ENCODE measurements at regions of chr2 and their contacts with region 1.

Region 1: GRCh38 chr2:146173934-146174333 is 1654.0 kb upstream of the ZEB2 start:
- DNase-seq: no peak
- H3K4me3 ChIP-seq: no peak overlapping the region
- H3K27ac ChIP-seq: no peak overlapping the region
- H3K4me1 ChIP-seq: no peaks in the 10 kb centered on the region
- H3K27me3 ChIP-seq: no peaks in the 10 kb centered on the region
- CTCF ChIP-seq: no peak
- POLR2A ChIP-seq: no peak

Region 2: DNA sequence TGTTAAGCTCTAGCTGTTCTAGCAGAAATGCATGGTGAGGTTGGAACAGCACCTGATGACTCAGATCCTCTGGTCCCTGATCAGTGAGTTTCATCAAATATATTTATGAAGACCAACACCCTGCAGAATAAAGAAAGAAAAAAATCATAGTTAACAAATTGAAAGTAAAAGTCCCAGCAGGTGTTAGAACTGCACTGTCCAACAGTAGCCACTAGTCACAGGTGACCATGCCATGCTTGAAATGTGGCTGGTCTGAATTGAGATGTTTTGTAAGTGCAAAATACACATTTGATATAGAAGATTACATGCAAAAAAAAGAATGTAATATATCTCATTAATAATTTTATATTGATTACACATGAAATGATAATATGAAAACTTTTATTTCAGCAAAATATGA is 643.3 kb before region 1 on chr2:
- intact Hi-C with region 1: no loop called
- DNase-seq: no peak
- H3K4me3 ChIP-seq: no peak overlapping the region
- H3K27ac ChIP-seq: no peak overlapping the region
- H3K4me1 ChIP-seq: no peaks in the 10 kb centered on the region
- H3K27me3 ChIP-seq: no peaks in the 10 kb centered on the region
- CTCF ChIP-seq: no peak
- POLR2A ChIP-seq: no peak

Region 3: GRCh38 chr2:145984541-145984940 is 189.4 kb before region 1 on chr2:
- intact Hi-C with region 1: loop called (anchors 5 kb)
- DNase-seq: no peak
- H3K4me3 ChIP-seq: no peak overlapping the region
- H3K27ac ChIP-seq: no peak overlapping the region
- H3K4me1 ChIP-seq: no peaks in the 10 kb centered on the region
- H3K27me3 ChIP-seq: no peaks in the 10 kb centered on the region
- CTCF ChIP-seq: no peak
- POLR2A ChIP-seq: no peak

Region 4: DNA sequence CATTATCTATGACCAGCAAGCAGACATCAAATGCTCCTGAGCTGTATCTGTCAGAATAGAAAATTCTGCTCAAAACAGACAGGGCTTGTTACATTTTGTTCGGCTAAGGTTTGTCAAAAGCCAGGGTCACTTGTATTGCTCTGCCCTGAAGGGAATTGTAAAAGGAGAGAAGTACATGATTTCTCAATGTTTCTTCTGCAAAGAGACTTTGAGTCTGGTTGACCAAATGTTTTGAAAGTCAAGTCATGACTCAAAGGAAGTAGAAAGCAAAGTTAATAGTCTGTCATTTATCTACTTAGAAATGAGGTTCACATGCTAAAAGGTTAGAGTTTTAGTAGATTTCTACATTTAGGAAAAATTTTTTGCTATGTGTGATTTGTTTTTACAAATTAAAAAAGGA is 30.0 kb before region 1 on chr2:
- intact Hi-C with region 1: no loop called
- DNase-seq: no peak
- H3K4me3 ChIP-seq: no peak overlapping the region
- H3K27ac ChIP-seq: no peak overlapping the region
- H3K4me1 ChIP-seq: no peaks in the 10 kb centered on the region
- H3K27me3 ChIP-seq: no peaks in the 10 kb centered on the region
- CTCF ChIP-seq: no peak
- POLR2A ChIP-seq: no peak